ENCODE measurements at regions of chr6 and their contacts with region 1.

Region 1: GRCh38 chr6:125868678-125869402 is 78.1 kb downstream of the NCOA7 start:
- DNase-seq: no peak
- H3K4me3 Mint-ChIP-seq: no peak overlapping the region
- H3K27ac Mint-ChIP-seq: no peak overlapping the region
- H3K4me1 Mint-ChIP-seq: no peaks in the 10 kb centered on the region
- H3K27me3 Mint-ChIP-seq: no peaks in the 10 kb centered on the region

Region 2: GRCh38 chr6:125858427-125859320 is 10.2 kb before region 1 on chr6:
- intact Hi-C with region 1: loop called (anchors 1 kb)
- DNase-seq: peak; percentile 6
- H3K4me3 Mint-ChIP-seq: no peak overlapping the region
- H3K27ac Mint-ChIP-seq: peak overlapping the region; percentile 9
- H3K4me1 Mint-ChIP-seq: no peaks in the 10 kb centered on the region
- H3K27me3 Mint-ChIP-seq: no peaks in the 10 kb centered on the region

Region 3: DNA sequence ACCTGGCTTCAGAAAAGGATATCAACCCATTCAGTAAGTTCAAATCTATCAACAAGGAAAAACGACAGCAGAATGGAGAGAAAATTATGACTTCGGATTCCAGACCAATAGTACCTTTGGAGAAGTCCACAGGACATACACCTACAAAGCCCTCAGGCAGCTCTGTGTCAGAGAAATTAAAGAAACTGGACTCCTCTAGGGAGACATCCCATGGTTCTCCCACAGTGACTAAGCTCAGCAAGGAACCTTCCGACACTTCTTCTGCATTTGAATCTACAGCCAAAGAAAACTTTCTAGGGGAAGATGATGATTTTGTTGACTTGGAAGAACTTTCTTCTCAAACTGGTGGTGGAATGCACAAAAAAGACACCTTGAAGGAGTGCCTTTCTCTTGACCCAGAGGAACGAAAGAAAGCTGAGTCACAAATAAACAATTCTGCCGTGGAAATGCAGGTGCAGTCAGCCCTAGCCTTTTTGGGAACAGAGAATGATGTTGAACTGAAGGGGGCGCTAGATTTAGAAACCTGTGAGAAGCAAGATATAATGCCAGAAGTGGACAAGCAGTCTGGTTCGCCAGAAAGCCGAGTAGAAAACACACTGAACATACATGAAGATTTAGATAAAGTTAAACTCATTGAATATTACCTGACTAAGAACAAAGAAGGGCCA is 20.3 kb after region 1 on chr6:
- intact Hi-C with region 1: no loop called
- DNase-seq: peak; percentile 8
- H3K4me3 Mint-ChIP-seq: no peak overlapping the region
- H3K27ac Mint-ChIP-seq: no peak overlapping the region
- H3K4me1 Mint-ChIP-seq: no peaks in the 10 kb centered on the region
- H3K27me3 Mint-ChIP-seq: no peaks in the 10 kb centered on the region